ENCODE measurements at regions of chr10 and their contacts with region 1.

Region 1: DNA sequence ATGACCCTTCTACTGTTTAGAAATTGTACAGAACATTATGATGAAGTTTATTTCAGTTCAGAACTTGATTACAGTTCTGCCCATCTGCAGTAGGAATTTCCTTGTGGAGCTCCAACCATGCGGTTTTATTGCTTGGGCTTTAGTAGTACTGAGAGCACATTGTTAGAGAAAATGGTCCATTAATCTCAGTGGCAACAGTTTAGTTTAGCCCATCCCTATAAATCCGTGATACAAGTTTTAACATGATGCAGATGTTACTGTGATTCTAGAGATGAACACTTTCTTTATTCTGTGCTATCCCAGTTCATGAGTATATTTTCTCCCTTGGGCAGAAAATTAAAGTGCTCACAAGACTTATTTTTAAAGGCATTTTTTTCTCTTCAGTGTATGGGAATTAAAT is 84.8 kb upstream of the FZD8 start:
- DNase-seq: no peak
- ATAC-seq: no peak
- H3K4me3 ChIP-seq: no peak overlapping the region
- H3K4me3 Mint-ChIP-seq: no peak overlapping the region
- H3K27ac ChIP-seq: no peak overlapping the region
- H3K27ac Mint-ChIP-seq: no peak overlapping the region
- H3K4me1 ChIP-seq: no peaks in the 10 kb centered on the region
- H3K4me1 Mint-ChIP-seq: no peaks in the 10 kb centered on the region
- H3K27me3 ChIP-seq: no peaks in the 10 kb centered on the region
- H3K27me3 Mint-ChIP-seq: peaks cover 0 to 3% of the 10 kb centered on the region in 2 donors
- CTCF ChIP-seq: no peak

Region 2: DNA sequence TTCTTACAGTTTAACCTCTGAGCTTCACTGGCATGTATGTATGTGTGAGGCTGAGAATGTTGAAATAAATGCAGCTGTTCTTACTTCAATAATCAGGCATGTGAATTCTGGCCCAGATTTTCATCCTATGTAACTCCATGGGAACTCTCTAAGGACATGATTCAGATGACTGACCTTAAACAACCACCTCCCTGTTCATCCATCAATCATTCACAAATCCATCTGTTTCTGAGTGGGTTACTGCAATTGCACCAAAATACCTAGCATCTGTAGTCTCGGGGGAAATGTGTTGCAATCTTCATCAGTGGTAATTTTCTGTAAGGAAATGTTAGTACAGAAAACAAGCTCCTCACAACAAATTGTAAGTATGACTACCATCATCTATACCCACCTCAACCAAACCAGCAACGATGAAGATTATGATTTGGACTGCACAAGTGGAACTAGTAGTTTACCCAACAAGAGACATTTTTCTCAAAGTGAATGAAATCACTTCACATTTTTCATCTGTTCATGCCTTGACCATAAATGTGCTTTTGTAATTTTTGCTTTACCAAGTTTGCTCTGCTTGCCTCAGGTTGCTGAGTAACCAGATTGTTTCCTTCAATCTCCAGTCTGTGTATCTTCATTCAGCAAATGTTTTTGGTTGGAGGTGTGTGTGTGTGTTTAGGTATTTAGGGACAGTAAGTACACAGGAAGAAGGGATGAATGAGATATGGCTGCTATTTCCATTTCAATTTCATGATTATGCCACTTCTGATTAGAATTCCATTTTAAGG is 19.0 kb before region 1 on chr10:
- intact Hi-C with region 1: no loop called
- DNase-seq: no peak
- ATAC-seq: no peak
- H3K4me3 ChIP-seq: no peak overlapping the region
- H3K4me3 Mint-ChIP-seq: no peak overlapping the region
- H3K27ac ChIP-seq: no peak overlapping the region
- H3K27ac Mint-ChIP-seq: no peak overlapping the region
- H3K4me1 ChIP-seq: no peaks in the 10 kb centered on the region
- H3K4me1 Mint-ChIP-seq: no peaks in the 10 kb centered on the region
- H3K27me3 ChIP-seq: no peaks in the 10 kb centered on the region
- H3K27me3 Mint-ChIP-seq: no peaks in the 10 kb centered on the region
- CTCF ChIP-seq: no peak

Region 3: GRCh38 chr10:35781643-35782035 is 54.8 kb after region 1 on chr10:
- intact Hi-C with region 1: loop called (anchors 10 kb)
- DNase-seq: peak in 1 of 2 donors; percentile 14
- ATAC-seq: no peak
- H3K4me3 ChIP-seq: no peak overlapping the region
- H3K4me3 Mint-ChIP-seq: no peak overlapping the region
- H3K27ac ChIP-seq: no peak overlapping the region
- H3K27ac Mint-ChIP-seq: no peak overlapping the region
- H3K4me1 ChIP-seq: no peaks in the 10 kb centered on the region
- H3K4me1 Mint-ChIP-seq: no peaks in the 10 kb centered on the region
- H3K27me3 ChIP-seq: no peaks in the 10 kb centered on the region
- H3K27me3 Mint-ChIP-seq: no peaks in the 10 kb centered on the region
- CTCF ChIP-seq: no peak

Measured in natural killer cell (primary cell).